K562 (cell line): ENCODE measurements at regions of chr10 and their contacts with region 1.

Region 1: DNA sequence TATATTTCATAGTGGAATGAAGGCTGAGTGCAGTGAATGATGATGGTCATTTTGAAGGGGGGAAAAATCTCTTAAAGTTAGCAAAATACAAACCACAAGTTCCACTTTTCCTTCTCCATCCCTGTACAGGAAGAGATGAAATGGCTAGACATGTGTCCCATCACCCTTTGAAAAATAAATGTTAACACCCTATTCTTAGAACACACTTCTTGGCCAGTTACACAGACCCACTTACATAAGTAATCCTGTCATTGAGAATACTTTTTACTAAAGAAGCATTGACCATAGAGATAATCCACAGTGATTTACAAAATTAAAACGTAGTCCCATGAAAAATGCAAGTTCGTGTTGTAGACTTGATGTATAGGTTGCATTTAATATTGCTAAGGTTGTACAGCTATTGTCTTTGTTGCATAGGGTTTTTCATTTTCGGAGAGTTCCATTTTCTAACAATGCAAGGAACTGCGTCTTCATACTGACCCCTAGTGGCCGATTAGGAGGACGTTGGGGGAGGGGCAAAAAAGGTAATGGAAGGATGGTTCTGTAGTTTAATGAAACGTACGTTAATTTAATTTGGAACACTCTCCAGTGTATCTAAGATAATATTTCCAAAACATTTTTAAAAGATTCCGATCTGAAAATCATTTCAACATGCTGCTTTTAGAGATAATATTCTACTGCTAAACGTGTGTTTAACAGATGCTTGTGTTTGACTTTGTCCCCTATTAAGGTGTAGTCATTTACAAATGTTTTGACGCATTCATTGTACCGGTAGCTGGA is 60.9 kb downstream of the ARMC3 start:
- DNase-seq: peak; percentile 63 to 81 (median 65)
- ATAC-seq: peak; percentile 86
- H3K4me3 ChIP-seq: no peak overlapping the region
- H3K27ac ChIP-seq: no peak overlapping the region
- H3K4me1 ChIP-seq: peaks cover 0 to 3% of the 10 kb centered on the region in 2 experiments; a peak in 1 of 5 replicates
- H3K27me3 ChIP-seq: no peaks in the 10 kb centered on the region
- CTCF ChIP-seq: peak; percentile 69 to 93 (median 83)
- EP300 ChIP-seq: peak; percentile 56
- POLR2A ChIP-seq: no peak
- RAD21 ChIP-seq: peak; percentile 93 to 95

Region 2: DNA sequence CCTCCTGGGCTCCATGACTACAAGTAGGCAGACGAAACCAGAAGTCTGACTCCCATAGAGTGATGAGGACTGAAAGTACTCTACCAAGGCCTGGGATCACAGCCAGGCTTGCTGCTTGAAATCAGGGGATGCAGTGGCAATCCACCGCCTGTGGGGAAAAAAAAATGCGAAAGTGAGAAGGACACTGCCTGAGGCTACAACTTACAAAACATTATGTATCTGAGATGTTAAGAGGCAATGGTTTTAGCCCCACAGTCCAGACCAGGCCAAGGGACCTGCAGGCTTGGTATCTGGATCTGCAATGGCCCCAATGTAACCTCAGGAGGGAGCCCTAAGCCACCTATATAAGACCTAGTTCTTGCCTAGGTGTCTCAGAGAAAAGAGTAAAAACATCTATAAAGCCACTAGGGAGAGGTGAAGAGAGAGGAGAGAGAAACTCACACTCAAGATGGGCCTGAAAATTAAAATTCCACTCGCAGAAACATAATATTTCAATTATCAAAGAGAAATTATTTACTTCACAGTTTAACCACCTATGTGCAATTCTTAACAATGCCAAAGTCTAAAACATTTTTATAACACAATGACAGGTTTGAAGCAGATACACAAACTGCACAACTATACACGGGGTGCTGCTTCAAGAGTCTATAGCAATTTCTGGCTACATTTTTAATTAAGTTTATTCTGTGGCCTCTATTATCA is 999.2 kb before region 1 on chr10:
- CTCF ChIA-PET with region 1: interaction called, 6 read pairs
- POLR2A ChIA-PET with region 1: no interaction called
- in situ Hi-C with region 1: loop called (anchors 10 kb)
- intact Hi-C with region 1: loop called (anchors 2 kb)
- DNase-seq: peak; percentile 26 to 79 (median 48)
- ATAC-seq: peak; percentile 99
- H3K4me3 ChIP-seq: no peak overlapping the region
- H3K27ac ChIP-seq: no peak overlapping the region
- H3K4me1 ChIP-seq: peaks cover 0 to 3% of the 10 kb centered on the region in 2 experiments; a peak in 1 of 5 replicates
- H3K27me3 ChIP-seq: no peaks in the 10 kb centered on the region
- CTCF ChIP-seq: peak; percentile 75 to 85 (median 81)
- EP300 ChIP-seq: no peak
- POLR2A ChIP-seq: no peak
- RAD21 ChIP-seq: peak; percentile 66 to 78

Region 3: DNA sequence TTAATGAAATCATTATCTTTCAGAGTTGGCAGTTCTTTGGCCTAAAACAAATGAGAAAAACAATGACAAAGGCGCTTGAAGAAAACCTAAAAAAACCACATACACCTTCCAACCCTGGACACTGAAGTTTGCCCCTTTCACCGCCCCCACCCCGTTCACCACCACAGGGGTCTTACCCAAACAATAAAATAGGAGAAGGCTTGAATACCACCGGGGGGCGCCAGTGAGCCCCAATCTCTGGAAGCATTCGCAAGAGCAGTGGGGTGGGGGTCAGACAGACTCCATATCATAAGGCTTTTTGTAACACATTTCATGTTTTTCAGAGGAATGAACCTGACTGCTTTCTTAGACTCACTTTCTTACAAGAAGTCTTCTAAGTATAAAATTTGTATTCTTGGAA is 438.0 kb before region 1 on chr10:
- CTCF ChIA-PET with region 1: no interaction called
- POLR2A ChIA-PET with region 1: no interaction called
- in situ Hi-C with region 1: loop called (anchors 10 kb)
- intact Hi-C with region 1: loop called (anchors 2 kb)
- DNase-seq: peak; percentile 59 to 78 (median 64)
- ATAC-seq: peak; percentile 93
- H3K4me3 ChIP-seq: no peak overlapping the region
- H3K27ac ChIP-seq: no peak overlapping the region
- H3K4me1 ChIP-seq: peaks cover 0 to 2% of the 10 kb centered on the region in 2 experiments; a peak in 3 of 5 replicates
- H3K27me3 ChIP-seq: no peaks in the 10 kb centered on the region
- CTCF ChIP-seq: peak; percentile 61 to 84 (median 69)
- EP300 ChIP-seq: no peak
- POLR2A ChIP-seq: no peak
- RAD21 ChIP-seq: peak; percentile 68 to 69

Region 4: DNA sequence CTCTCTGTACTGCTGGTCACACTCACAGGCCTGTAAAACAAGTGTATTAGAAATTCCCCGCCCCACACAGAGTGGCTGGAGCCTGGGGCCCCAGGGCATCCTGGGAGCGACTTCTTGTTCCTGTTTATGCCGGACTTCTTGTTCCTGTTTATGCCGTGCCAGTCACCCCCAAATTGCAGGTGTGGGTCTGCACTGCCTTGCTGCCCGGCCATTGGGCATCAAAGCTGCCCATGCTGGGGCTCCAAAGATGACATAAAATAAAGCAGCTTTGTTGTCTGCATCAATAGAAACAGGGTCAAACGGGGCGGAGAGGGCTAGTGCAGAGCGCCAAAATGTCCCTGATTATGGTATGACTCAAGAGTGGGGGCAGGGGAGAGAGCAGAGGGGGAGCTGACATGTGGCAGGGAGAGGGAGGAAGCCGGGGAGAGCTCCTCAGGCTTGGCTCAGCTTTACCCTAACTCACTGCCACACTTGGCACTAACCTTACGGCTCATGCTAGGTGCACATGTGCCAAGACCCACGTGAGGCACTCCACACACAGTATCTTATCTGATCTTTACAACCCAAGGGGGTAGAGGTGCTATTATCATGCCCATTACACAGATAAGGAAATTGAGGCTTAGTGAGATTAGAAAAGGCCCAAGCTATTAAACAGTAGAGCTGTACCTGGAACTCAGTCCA is 372.8 kb before region 1 on chr10:
- CTCF ChIA-PET with region 1: no interaction called
- POLR2A ChIA-PET with region 1: no interaction called
- in situ Hi-C with region 1: no loop called
- intact Hi-C with region 1: loop called (anchors 5 kb)
- DNase-seq: peak; percentile 70 to 86 (median 74)
- ATAC-seq: peak; percentile 97
- H3K4me3 ChIP-seq: peak overlapping the region; percentile 49
- H3K27ac ChIP-seq: peak overlapping the region; percentile 95
- H3K4me1 ChIP-seq: peaks cover 17 to 41% of the 10 kb centered on the region in 2 experiments
- H3K27me3 ChIP-seq: no peaks in the 10 kb centered on the region
- CTCF ChIP-seq: no peak
- EP300 ChIP-seq: no peak; the same call in 1 of the 2 replicates
- POLR2A ChIP-seq: peak; percentile 71
- RAD21 ChIP-seq: no peak; a peak in 1 of 4 replicates

Region 5: DNA sequence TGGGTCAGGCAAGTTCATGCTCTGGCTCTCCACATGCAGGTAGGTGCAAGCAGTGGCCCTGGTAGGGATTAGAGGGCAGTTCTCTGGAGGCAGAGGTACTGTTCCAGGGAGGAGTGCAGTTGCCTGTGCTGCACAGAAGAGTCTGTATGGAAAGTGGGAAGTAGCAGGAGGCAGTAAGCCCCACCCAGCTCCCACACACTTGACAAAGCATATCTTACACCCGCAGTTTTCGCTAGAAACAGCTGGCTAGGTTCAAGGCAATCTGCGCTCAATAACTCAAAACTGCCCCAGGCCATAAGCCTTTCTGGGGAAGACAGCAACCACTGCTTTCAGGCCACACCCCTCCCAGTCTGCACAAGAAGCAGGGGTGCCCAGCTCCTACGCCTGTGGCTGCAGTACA is 94.1 kb before region 1 on chr10:
- CTCF ChIA-PET with region 1: no interaction called
- POLR2A ChIA-PET with region 1: no interaction called
- in situ Hi-C with region 1: no loop called
- intact Hi-C with region 1: loop called (anchors 10 kb)
- DNase-seq: peak in 2 of 4 experiments; percentile 17 to 75
- ATAC-seq: peak; percentile 87
- H3K4me3 ChIP-seq: no peak overlapping the region
- H3K27ac ChIP-seq: no peak overlapping the region
- H3K4me1 ChIP-seq: peaks cover 11 to 17% of the 10 kb centered on the region in 2 experiments; a peak in 4 of 5 replicates
- H3K27me3 ChIP-seq: no peaks in the 10 kb centered on the region
- CTCF ChIP-seq: no peak
- EP300 ChIP-seq: 0 out of 2 replicates have a peak, but pooled peaks have one; percentile 7
- POLR2A ChIP-seq: no peak
- RAD21 ChIP-seq: no peak

Region 6: GRCh38 chr10:23171223-23171876 is 182.6 kb after region 1 on chr10:
- CTCF ChIA-PET with region 1: no interaction called
- POLR2A ChIA-PET with region 1: no interaction called
- in situ Hi-C with region 1: no loop called
- intact Hi-C with region 1: no loop called
- DNase-seq: peak; percentile 32 to 46 (median 40)
- ATAC-seq: peak; percentile 75
- H3K4me3 ChIP-seq: no peak overlapping the region
- H3K27ac ChIP-seq: no peak overlapping the region
- H3K4me1 ChIP-seq: peaks cover 0 to 22% of the 10 kb centered on the region in 2 experiments; a peak in 2 of 5 replicates
- H3K27me3 ChIP-seq: peaks cover 2 to 31% of the 10 kb centered on the region in 2 experiments
- CTCF ChIP-seq: no peak
- EP300 ChIP-seq: no peak
- POLR2A ChIP-seq: no peak
- RAD21 ChIP-seq: no peak